Activated CD4-positive, alpha-beta T cell treated with anti-CD3 and anti-CD28 coated beads, Interleukin-2, amount 10 ng/mL, durations not matched to agents 24 days and 14 days (primary cell): ENCODE measurements at regions of chr10 and their contacts with region 1.

Region 1: GRCh38 chr10:31928549-31929260 is at the start of gene ARHGAP12:
- DNase-seq: peak; percentile 94
- H3K4me3 Mint-ChIP-seq: peak within 1 kb of the TSS; percentile 89
- H3K27ac Mint-ChIP-seq: peak within 1 kb of the TSS; percentile 73
- H3K4me1 Mint-ChIP-seq: peaks cover 36% of the 10 kb centered on the region
- H3K27me3 Mint-ChIP-seq: peaks cover 6% of the 10 kb centered on the region
- total RNA-seq, gene ARHGAP12: 3.6 and 3.7 TPM in 2 replicates

Region 2: DNA sequence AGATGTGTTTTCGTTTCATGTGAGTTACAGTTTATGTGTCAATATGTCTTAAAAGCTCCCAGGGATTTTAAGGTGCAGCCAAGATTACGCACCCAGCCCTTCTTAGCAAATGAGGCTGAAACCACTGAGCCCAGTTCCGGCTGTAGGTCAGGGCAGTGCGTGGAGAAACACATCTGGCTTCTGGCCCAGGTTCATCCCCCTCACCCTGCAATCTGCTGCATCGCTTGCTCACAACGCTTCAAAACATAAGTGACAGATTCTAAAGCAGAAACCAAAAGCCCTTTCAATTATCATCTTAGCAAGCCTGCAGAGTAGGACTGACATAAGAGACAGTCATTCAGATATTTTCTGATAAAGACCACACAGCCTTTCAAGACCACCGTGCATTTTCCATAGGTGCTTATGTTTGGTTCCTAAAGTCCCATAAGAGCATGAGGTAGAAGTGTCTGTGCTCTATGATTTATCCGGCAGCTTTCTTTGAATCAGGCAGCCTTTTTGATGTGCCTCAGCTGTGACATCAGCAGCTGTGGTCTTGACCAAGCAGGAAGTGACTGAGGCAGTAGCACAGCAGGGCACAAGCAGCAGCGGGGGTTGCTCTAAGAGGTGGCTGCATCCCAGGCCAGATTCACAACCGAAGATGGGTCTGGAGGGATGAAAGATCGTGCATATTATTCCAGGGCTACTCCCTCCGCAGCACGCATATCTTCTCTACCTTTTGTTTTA is 1227.1 kb before region 1 on chr10:
- intact Hi-C with region 1: loop called (anchors 10 kb)
- DNase-seq: peak; percentile 92
- H3K4me3 Mint-ChIP-seq: peak overlapping the region; percentile 76
- H3K27ac Mint-ChIP-seq: peak overlapping the region; percentile 95
- H3K4me1 Mint-ChIP-seq: peaks cover 78% of the 10 kb centered on the region
- H3K27me3 Mint-ChIP-seq: no peaks in the 10 kb centered on the region

Region 3: GRCh38 chr10:31864834-31865518 is 63.7 kb before region 1 on chr10:
- intact Hi-C with region 1: loop called (anchors 5 kb)
- DNase-seq: no peak
- H3K4me3 Mint-ChIP-seq: no peak overlapping the region
- H3K27ac Mint-ChIP-seq: no peak overlapping the region
- H3K4me1 Mint-ChIP-seq: peaks cover 3% of the 10 kb centered on the region
- H3K27me3 Mint-ChIP-seq: no peaks in the 10 kb centered on the region

Region 4: GRCh38 chr10:32005050-32005449 is 76.3 kb after region 1 on chr10:
- intact Hi-C with region 1: loop called (anchors 5 kb)
- DNase-seq: peak; percentile 82
- H3K4me3 Mint-ChIP-seq: no peak overlapping the region
- H3K27ac Mint-ChIP-seq: no peak overlapping the region
- H3K4me1 Mint-ChIP-seq: peaks cover 8% of the 10 kb centered on the region
- H3K27me3 Mint-ChIP-seq: no peaks in the 10 kb centered on the region

Region 5: DNA sequence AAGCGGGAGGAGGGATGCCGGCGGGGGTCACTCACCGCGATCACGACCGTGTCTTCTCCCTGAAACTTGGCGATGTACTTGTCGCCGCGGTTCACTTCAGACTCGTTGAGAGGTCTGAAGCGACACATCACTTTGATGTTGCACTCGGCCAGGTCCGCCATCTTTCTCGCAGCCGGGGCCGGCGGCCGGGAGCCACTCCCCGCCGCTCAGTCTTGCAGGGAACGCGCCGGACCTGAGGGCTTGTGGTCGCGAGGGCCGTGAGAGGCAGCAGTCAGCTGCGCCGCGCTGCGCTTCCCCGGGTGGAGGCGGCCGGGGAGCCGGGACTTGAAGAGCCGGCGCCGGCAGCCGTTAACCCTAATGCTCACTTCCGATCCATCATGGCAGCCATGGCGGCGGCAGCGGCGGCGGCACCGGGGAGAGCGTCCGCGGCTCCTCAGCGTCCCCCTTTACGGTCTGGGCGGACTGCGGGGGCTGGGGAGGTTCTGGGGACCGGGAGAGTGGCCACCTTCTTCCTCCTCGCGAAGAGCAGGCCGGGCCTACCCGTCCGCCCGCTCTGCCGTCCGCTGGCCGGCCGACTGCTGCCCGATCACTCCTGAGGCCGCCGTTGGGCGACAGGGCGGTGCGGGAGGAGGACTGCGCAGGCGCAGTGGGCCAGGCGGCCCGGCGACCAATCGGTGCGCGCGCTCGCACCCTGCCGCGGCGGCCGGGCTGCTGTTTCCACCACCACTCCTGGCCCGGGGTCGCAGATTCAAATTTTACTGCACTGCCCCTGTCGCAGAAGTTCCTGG is 127.3 kb after region 1 on chr10 and contains the start of gene KIF5B:
- intact Hi-C with region 1: loop called (anchors 2 kb)
- DNase-seq: peak; percentile 97
- H3K4me3 Mint-ChIP-seq: peak within 1 kb of the TSS; percentile 92
- H3K27ac Mint-ChIP-seq: peak within 1 kb of the TSS; percentile 96
- H3K4me1 Mint-ChIP-seq: peaks cover 36% of the 10 kb centered on the region
- H3K27me3 Mint-ChIP-seq: no peaks in the 10 kb centered on the region
- total RNA-seq, gene KIF5B: 81.3 and 82.2 TPM in 2 replicates

Region 6: DNA sequence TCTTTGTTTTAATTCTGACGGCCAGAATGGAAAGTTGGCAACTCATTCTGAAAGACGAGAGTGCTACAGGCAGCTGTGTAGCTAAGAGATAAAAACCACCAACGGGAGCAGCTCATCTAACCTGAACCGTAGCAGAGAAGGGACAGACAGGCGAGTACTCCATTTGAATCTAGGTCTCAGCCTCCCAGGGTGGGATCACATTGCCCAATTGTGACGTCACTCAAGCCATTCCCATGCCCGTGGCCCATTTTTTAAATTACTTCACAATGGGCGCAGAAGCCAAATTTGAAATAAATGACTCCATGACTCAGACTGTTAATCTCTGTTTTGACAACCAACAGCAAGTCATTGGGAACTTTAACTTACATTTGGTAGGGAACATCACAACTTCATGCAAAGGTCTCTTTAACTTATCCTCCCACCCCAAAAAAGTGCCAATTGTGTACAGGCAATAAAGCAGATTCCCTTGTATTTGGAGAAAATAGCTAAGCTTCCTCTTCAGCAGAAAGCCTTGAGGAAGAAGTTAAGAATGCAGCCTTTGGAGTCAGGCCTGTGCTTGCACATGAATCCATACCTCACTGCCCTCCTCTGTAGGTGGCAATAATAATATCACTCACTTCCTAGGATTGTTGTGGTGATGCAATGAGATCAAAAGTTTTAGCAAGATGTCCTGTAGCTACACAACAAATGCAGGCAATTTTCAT is 220.7 kb after region 1 on chr10:
- intact Hi-C with region 1: loop called (anchors 5 kb)
- DNase-seq: peak; percentile 80
- H3K4me3 Mint-ChIP-seq: peak overlapping the region; percentile 76
- H3K27ac Mint-ChIP-seq: peak overlapping the region; percentile 94
- H3K4me1 Mint-ChIP-seq: peaks cover 34% of the 10 kb centered on the region
- H3K27me3 Mint-ChIP-seq: no peaks in the 10 kb centered on the region

Region 7: DNA sequence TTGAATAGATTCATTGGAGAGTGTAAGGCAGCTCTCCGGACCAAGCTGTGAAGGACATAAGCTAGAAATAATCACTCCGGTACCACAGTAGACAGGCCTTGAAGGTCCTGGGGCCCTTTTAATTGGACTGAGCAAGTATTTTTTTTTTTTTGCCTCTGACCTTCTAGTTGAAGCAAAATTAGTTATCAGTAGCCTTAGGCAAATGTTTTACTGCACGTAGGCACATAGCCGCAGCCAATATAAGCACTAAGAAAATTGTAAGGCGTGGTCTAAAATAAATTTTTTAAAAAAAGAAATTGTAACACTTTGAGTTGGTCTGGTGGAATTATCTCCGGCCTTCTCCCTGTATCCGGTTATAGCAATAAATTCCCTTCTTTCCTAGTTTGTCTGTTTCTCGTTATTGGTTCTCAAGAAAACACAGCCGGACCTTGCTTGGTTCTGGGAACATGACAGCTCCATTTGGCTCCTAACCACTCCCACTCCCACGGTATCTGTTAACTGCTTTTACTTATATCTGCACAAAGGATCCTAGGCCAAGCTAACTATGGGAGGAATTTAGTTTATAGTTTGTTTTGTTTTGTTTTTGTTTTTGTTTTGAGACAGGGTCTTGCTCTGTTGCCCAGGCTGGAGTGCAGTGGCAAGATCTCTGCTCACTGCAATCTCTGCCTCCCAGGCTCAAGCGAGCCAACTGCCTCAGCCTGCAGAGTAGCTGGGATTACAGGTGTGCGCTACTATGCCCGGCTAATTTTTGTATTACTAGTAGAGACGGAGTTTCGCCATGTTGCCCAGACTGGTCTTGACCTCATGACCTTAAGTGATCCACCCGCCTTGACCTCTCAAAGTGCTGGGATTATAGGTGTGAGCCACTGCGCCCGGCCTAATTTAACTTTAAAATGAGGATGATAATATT is 251.9 kb after region 1 on chr10:
- intact Hi-C with region 1: no loop called
- DNase-seq: no peak
- H3K4me3 Mint-ChIP-seq: no peak overlapping the region
- H3K27ac Mint-ChIP-seq: no peak overlapping the region
- H3K4me1 Mint-ChIP-seq: no peaks in the 10 kb centered on the region
- H3K27me3 Mint-ChIP-seq: peaks cover 2% of the 10 kb centered on the region

Region 8: GRCh38 chr10:32378363-32379317 is 449.9 kb after region 1 on chr10:
- intact Hi-C with region 1: loop called (anchors 10 kb)
- DNase-seq: peak; percentile 97
- H3K4me3 Mint-ChIP-seq: no peak overlapping the region
- H3K27ac Mint-ChIP-seq: no peak overlapping the region
- H3K4me1 Mint-ChIP-seq: peaks cover 18% of the 10 kb centered on the region
- H3K27me3 Mint-ChIP-seq: no peaks in the 10 kb centered on the region